Activated naive CD4-positive, alpha-beta T cell treated with anti-CD3 and anti-CD28 coated beads for 36 hours (primary cell): ENCODE measurements at regions of chr15 and their contacts with region 1.

Region 1: GRCh38 chr15:93018580-93018979 is 70.4 kb downstream of the RGMA start:
- DNase-seq: no peak
- H3K4me3 Mint-ChIP-seq: no peak overlapping the region
- H3K27ac Mint-ChIP-seq: peak overlapping the region; percentile 65
- H3K4me1 Mint-ChIP-seq: peaks cover 69% of the 10 kb centered on the region
- H3K27me3 Mint-ChIP-seq: no peaks in the 10 kb centered on the region

Region 2: DNA sequence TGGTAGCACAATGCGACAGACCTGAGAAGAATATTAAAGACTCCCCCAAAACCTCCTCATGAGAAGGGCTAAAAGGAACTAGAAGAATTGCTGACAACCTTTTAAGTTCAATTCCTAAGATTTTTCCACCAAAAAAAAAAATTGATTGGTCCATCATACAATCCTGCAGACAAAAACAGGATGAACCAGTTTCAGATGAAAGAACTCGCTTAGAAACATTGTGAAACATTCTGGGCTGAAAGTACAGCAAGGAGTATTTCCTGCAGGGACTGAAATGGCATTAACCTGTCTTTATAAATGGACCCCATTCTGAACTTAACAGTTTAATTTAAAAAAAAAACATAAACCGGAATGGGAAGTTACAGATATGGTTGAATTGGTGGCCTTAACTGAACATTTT is 267.1 kb before region 1 on chr15:
- CTCF ChIA-PET with region 1: no interaction called
- intact Hi-C with region 1: no loop called
- DNase-seq: no peak
- H3K4me3 Mint-ChIP-seq: no peak overlapping the region
- H3K27ac Mint-ChIP-seq: no peak overlapping the region
- H3K4me1 Mint-ChIP-seq: no peaks in the 10 kb centered on the region
- H3K27me3 Mint-ChIP-seq: no peaks in the 10 kb centered on the region

Region 3: GRCh38 chr15:92958105-92958504 is 60.5 kb before region 1 on chr15:
- CTCF ChIA-PET with region 1: no interaction called
- intact Hi-C with region 1: loop called (anchors 1 kb)
- DNase-seq: peak; percentile 80
- H3K4me3 Mint-ChIP-seq: peak overlapping the region; percentile 20
- H3K27ac Mint-ChIP-seq: peak overlapping the region; percentile 85
- H3K4me1 Mint-ChIP-seq: peaks cover 56% of the 10 kb centered on the region
- H3K27me3 Mint-ChIP-seq: no peaks in the 10 kb centered on the region

Region 4: GRCh38 chr15:92981333-92981732 is 37.2 kb before region 1 on chr15:
- CTCF ChIA-PET with region 1: no interaction called
- intact Hi-C with region 1: loop called (anchors 2 kb)
- DNase-seq: no peak
- H3K4me3 Mint-ChIP-seq: no peak overlapping the region
- H3K27ac Mint-ChIP-seq: no peak overlapping the region
- H3K4me1 Mint-ChIP-seq: peaks cover 8% of the 10 kb centered on the region
- H3K27me3 Mint-ChIP-seq: no peaks in the 10 kb centered on the region

Region 5: DNA sequence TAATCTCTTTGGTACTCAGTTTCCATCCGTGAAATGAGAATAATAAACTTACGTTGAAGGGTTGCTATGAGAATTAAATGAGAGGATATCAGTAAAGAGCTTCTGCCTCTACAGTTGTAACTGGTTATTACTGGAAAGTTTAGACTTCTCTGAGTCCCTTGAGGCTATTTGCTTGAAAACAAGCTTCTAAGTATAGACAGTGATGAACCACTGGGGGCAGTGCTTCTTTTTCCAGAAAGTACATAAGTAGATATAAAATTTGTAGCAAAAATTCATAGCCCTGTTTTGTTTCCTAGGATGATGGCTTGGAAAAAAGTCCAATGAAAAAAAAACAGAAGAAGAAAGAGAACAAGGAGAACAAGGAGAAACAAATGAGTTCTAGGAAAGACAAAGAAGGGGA is 16.7 kb before region 1 on chr15:
- CTCF ChIA-PET with region 1: interaction called, 6 read pairs
- intact Hi-C with region 1: loop called (anchors 1 kb)
- DNase-seq: no peak
- H3K4me3 Mint-ChIP-seq: no peak overlapping the region
- H3K27ac Mint-ChIP-seq: peak overlapping the region; percentile 76
- H3K4me1 Mint-ChIP-seq: peaks cover 9% of the 10 kb centered on the region
- H3K27me3 Mint-ChIP-seq: no peaks in the 10 kb centered on the region

Region 6: DNA sequence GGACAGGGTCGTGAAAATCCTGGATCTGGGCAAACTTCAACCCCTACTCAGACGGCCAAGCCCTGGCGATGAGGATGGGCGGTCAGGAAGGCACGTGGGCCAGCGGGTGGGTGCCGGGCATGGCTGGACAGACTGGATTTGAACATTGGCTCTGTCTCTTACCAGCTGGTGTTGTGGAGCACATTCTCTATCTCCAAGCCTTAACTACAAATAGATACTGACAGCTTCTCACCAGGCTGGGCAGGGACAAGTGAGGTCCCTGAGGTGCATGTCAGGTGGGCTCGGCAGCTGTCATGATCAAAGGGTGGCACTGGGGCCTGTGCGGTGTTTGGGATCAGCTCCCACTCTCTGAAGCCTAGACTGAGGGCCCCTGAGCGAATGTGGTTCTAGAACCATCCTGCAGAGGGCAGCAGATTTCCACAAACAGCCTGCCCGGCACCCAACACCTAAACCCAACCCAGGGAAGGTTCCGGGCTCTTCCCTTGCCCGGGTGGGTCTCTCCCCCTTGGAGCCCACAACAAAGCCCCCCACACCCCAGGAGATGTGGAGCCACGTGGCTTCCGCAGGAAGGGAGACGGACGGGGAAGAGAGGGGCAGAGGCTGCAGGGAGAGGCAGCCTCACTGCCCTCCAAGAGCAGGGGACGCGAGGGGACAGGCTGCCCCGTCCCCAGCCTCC is 12.0 kb after region 1 on chr15:
- CTCF ChIA-PET with region 1: interaction called, 19 read pairs
- intact Hi-C with region 1: no loop called
- DNase-seq: peak; percentile 78
- H3K4me3 Mint-ChIP-seq: no peak overlapping the region
- H3K27ac Mint-ChIP-seq: no peak overlapping the region
- H3K4me1 Mint-ChIP-seq: peaks cover 33% of the 10 kb centered on the region
- H3K27me3 Mint-ChIP-seq: no peaks in the 10 kb centered on the region